Ascending aorta (tissue), 2 donors: ENCODE measurements at regions of chr1 and their contacts with region 1.

Region 1: DNA sequence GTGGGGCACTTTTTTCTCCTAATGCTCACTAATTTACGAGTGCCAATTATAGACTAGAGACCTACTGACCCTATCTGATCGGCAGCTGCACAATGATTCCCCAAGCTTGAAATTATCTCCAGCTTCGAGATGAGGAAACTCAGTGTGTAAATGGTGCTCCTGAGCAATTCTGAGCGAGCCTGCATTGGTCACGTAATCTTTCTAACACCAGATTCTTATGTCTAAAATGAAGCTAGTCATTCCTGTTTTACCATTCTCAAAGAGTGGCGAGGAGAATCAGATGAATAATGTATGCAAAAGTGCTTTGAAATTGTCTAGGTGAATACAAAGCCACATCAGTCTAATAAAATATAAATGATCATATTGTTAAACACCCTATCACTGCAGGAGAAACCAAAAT is 318.1 kb upstream of the FAM78B start:
- DNase-seq: no peak
- H3K4me3 ChIP-seq: no peak overlapping the region
- H3K27ac ChIP-seq: no peak overlapping the region
- H3K4me1 ChIP-seq: no peaks in the 10 kb centered on the region
- H3K27me3 ChIP-seq: no peaks in the 10 kb centered on the region
- CTCF ChIP-seq: no peak

Region 2: DNA sequence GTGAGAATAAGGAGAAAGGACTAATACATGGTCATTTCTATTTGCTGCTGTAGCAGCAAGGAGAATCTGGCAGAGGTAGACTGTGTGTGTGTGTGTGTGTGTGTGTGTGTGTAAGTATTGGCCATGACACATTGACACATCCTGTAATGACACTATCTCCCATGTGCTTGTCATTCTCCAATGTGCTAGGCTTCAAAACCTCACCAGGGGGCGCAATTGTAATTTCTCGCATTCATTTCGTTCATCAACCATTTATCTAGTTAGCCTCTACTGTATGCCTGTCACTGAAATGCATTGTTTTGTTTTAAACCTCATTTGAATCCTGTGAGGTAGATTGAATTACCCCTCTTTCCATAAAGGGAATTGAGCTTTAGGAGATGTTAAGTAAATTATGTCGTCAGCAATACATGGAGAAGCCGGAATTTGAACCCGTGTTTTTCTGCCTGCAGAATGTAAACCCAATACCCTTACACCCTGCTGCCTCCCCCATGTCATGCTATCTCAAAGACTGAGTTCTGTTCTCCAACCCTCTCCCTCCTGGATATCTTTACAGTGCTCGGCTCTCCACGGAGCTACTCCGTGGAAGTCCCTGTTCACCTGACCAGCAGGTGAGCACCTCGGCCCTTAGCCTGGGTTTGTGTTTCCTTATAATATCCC is 556.7 kb before region 1 on chr1:
- intact Hi-C with region 1: loop called (anchors 5 kb)
- DNase-seq: peak in 1 of 2 donors; percentile 48
- H3K4me3 ChIP-seq: no peak overlapping the region
- H3K27ac ChIP-seq: no peak overlapping the region
- H3K4me1 ChIP-seq: no peaks in the 10 kb centered on the region
- H3K27me3 ChIP-seq: no peaks in the 10 kb centered on the region
- CTCF ChIP-seq: peak; percentile 25 to 47 (median 45)

Region 3: GRCh38 chr1:166379447-166379846 is 105.4 kb before region 1 on chr1:
- intact Hi-C with region 1: no loop called
- DNase-seq: no peak
- H3K4me3 ChIP-seq: no peak overlapping the region
- H3K27ac ChIP-seq: no peak overlapping the region
- H3K4me1 ChIP-seq: no peaks in the 10 kb centered on the region
- H3K27me3 ChIP-seq: no peaks in the 10 kb centered on the region
- CTCF ChIP-seq: no peak